ENCODE measurements at regions of chr1 and their contacts with region 1.

Region 1: DNA sequence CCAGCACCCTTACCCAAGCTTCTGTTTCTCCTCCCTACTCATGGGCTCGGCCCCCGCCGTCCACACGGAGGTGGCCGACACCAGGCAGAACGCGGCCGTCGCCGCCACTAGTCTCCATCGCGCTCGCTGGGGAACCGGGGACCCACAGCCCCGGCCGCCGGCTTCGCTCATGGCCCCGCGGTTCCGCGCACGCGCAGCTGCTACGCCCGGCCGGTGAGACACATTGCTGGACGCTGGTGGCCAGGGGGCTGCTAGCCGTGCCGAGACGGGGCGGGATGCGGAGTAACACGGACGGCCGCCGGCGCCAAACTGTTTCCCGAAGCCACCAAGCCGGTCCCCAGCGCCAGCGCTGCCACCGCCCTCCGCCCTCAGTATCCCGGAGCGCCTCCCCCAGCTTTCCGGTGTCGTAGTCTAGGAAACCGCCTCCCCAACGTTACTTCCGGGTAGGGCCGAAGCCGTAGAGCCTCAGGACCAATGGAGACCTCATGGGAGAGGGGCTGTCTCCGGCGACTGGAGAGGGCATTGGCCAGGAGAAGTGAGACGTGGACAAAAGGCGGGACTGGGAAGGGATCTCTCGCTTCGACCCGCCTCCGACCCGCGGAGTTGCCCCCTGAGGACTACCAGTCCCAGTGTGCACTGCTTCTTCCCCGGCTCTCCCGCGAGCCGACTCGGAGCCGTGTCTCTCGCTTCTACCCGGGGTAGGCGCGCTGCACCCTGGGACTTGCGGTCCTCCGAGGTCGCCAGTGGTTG is at the start of gene EDEM3:
- DNase-seq: peak; percentile 98
- H3K4me3 Mint-ChIP-seq: peak within 1 kb of the TSS; percentile 87
- H3K27ac Mint-ChIP-seq: peak within 1 kb of the TSS; percentile 79
- H3K4me1 Mint-ChIP-seq: peaks cover 41% of the 10 kb centered on the region
- H3K27me3 Mint-ChIP-seq: peaks cover 19% of the 10 kb centered on the region
- total RNA-seq, gene EDEM3: 25.3 and 30.2 TPM in 2 replicates

Region 2: GRCh38 chr1:183471743-183472487 is 1282.7 kb before region 1 on chr1:
- intact Hi-C with region 1: loop called (anchors 2 kb)
- DNase-seq: peak; percentile 92
- H3K4me3 Mint-ChIP-seq: peak overlapping the region; percentile 87
- H3K27ac Mint-ChIP-seq: peak overlapping the region; percentile 99
- H3K4me1 Mint-ChIP-seq: peaks cover 24% of the 10 kb centered on the region
- H3K27me3 Mint-ChIP-seq: no peaks in the 10 kb centered on the region

Region 3: GRCh38 chr1:184386312-184387068 is 368.2 kb before region 1 on chr1 and contains the start of gene C1orf21:
- intact Hi-C with region 1: loop called (anchors 2 kb)
- DNase-seq: peak; percentile 70
- H3K4me3 Mint-ChIP-seq: peak within 1 kb of the TSS; percentile 87
- H3K27ac Mint-ChIP-seq: peak within 1 kb of the TSS; percentile 70
- H3K4me1 Mint-ChIP-seq: peaks cover 22% of the 10 kb centered on the region
- H3K27me3 Mint-ChIP-seq: peaks cover 76% of the 10 kb centered on the region
- total RNA-seq, gene C1orf21: 3.4 and 4.2 TPM in 2 replicates

Region 4: DNA sequence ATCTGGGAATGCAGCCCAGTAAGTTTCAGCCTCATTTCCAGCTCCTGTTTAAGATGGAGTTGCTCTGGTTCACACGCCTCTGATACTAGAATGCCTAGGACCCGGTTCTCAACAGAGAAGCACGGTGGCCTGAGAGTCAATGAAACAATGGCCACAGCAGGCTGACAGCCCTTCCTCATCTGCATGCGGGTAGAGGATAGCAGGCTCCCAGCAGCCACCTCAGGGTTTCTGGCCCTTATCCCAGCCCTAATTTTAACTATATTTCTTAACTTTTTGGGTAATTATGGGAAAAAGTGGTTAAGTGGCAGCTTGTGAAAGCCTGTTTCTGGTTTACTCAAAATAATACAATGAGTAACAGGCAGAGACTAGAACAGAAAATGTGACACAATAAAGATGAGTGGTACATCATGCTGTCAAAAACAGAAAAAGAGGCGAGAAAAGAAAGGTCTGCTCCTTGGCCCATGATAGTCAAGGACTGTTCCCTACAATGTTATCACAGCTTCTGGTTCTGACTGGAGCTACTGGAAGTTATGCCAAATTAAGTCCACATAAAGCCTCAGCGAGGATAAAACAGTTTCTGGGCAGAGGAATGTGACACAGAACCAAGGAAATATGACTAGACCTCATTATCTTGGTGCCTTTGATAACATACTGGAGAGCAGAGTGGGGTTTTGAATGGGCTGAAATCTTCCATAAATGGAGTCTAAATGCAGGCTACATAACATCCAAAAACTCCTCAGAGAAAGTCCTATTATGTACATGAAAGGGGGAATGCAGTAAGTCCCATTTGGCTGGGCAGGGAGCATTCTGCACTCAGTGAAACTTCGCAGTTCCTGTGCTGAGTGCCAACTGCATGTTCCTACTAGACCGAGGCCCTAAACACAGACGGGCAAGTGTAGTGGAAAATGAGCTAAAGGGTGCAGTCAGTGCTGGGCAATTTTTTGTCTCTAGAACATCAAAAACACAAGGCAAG is 127.6 kb after region 1 on chr1:
- intact Hi-C with region 1: loop called (anchors 2 kb)
- DNase-seq: no peak
- H3K4me3 Mint-ChIP-seq: peak overlapping the region; percentile 1
- H3K27ac Mint-ChIP-seq: peak overlapping the region; percentile 90
- H3K4me1 Mint-ChIP-seq: peaks cover 31% of the 10 kb centered on the region
- H3K27me3 Mint-ChIP-seq: peaks cover 5% of the 10 kb centered on the region

Region 5: GRCh38 chr1:185044981-185045813 is 290.5 kb after region 1 on chr1 and contains the start of gene RNF2:
- intact Hi-C with region 1: loop called (anchors 1 kb)
- DNase-seq: peak; percentile 67
- H3K4me3 Mint-ChIP-seq: peak within 1 kb of the TSS; percentile 87
- H3K27ac Mint-ChIP-seq: peak within 1 kb of the TSS; percentile 80
- H3K4me1 Mint-ChIP-seq: peaks cover 21% of the 10 kb centered on the region
- H3K27me3 Mint-ChIP-seq: peaks cover 13% of the 10 kb centered on the region
- total RNA-seq, gene RNF2: 25.7 and 30.6 TPM in 2 replicates

Region 6: GRCh38 chr1:185439727-185440415 is 685.2 kb after region 1 on chr1:
- intact Hi-C with region 1: loop called (anchors 10 kb)
- DNase-seq: peak; percentile 44
- H3K4me3 Mint-ChIP-seq: no peak overlapping the region
- H3K27ac Mint-ChIP-seq: no peak overlapping the region
- H3K4me1 Mint-ChIP-seq: peaks cover 19% of the 10 kb centered on the region
- H3K27me3 Mint-ChIP-seq: no peaks in the 10 kb centered on the region